Mammary epithelial cell (primary cell): ENCODE measurements at regions of chr3 and their contacts with region 1.

Region 1: GRCh38 chr3:179562591-179563270 is at the start of gene ACTL6A:
- DNase-seq: peak; percentile 100
- H3K4me3 ChIP-seq: peak within 1 kb of the TSS; percentile 85 to 98 (median 96)
- H3K27ac ChIP-seq: peak within 1 kb of the TSS; percentile 72
- H3K4me1 ChIP-seq: peaks cover 15% of the 10 kb centered on the region
- H3K27me3 ChIP-seq: no peaks in the 10 kb centered on the region
- CTCF ChIP-seq: no peak
- total RNA-seq, gene ACTL6A: 41.5 to 59.4 TPM

Region 2: DNA sequence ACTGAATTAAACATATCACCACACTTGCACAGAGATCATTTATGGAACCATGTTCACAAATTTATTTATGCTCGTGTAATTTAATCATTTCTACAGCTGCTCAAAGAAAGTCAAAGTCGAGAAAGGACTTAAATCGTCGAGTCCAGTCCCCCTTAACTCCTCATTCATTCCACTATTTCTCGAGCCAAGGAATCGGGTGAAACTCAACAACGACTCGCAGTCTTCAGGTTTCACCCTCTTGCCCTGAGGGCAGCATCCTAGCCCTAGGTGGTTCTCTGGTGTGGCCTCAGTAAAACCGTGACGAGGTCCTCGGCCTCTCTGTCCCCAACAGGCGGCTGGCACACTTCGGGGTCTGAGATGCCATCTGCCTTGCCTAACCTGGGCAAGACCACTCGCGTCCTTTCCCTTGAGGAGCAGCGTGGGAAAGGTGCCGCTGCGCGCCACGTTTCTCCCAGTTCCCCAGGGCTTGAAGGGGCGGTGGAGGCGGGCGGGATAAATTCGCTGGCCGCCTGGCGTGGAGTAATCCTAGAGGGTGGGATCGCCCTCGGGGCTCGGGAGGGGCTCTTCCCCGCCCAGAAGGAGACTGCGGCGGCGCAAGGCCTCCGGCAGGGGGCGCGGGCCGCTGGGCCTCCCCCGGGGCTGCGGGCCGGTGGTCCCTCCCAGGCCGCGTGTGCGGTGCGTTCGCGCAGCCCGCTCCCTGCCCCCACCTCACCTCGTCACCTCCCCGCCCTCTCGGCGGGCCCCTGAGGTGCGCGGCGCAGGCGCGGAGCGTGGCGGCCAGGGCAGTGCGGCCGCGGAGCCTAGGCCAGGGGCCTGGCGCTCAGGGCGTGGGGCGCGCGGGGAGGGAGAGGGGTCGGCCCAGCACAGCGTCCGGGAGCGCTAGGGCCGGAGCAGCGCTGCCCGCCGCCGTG is 240.2 kb before region 1 on chr3 and contains the start of gene ZNF639:
- CTCF ChIA-PET with region 1: no interaction called
- dilution Hi-C with region 1: no loop called
- in situ Hi-C with region 1: no loop called
- intact Hi-C with region 1: loop called (anchors 1 kb)
- DNase-seq: peak; percentile 67
- H3K4me3 ChIP-seq: peak within 1 kb of the TSS; percentile 79 to 96 (median 80)
- H3K27ac ChIP-seq: peak within 1 kb of the TSS; percentile 63
- H3K4me1 ChIP-seq: peaks cover 25% of the 10 kb centered on the region
- H3K27me3 ChIP-seq: no peaks in the 10 kb centered on the region
- CTCF ChIP-seq: peak; percentile 41 to 58
- total RNA-seq, gene ZNF639: 25.3 to 27.7 TPM

Region 3: DNA sequence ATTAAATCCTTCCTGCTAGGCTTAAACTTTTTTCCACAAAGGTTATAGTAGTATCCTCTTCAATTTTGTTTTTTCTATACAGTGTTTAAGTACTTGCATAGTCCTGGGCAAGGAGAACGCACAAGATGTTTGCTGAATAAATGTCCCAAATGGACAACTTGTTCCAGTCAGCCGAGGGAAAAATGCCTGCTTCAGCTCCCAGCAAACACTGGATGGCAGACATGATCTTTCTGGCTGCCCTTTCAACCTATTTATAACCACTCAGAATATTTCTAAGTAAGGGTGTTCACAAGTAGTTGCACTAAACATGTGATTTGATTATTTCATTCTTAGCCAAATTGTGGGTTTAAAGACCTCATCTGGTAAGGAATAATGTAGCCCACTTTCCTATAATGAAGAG is 141.2 kb before region 1 on chr3:
- CTCF ChIA-PET with region 1: interaction called, 3 read pairs
- dilution Hi-C with region 1: no loop called
- in situ Hi-C with region 1: no loop called
- intact Hi-C with region 1: loop called (anchors 1 kb)
- DNase-seq: peak; percentile 15
- H3K4me3 ChIP-seq: no peak overlapping the region
- H3K27ac ChIP-seq: no peak overlapping the region
- H3K4me1 ChIP-seq: no peaks in the 10 kb centered on the region
- H3K27me3 ChIP-seq: no peaks in the 10 kb centered on the region
- CTCF ChIP-seq: peak; percentile 37 to 57

Region 4: GRCh38 chr3:179446501-179446900 is 116.2 kb before region 1 on chr3:
- CTCF ChIA-PET with region 1: no interaction called
- dilution Hi-C with region 1: no loop called
- in situ Hi-C with region 1: loop called (anchors 10 kb)
- intact Hi-C with region 1: loop called (anchors 1 kb)
- DNase-seq: peak; percentile 38
- H3K4me3 ChIP-seq: no peak overlapping the region
- H3K27ac ChIP-seq: no peak overlapping the region
- H3K4me1 ChIP-seq: peaks cover 6% of the 10 kb centered on the region
- H3K27me3 ChIP-seq: no peaks in the 10 kb centered on the region
- CTCF ChIP-seq: peak; percentile 32 to 44

Region 5: DNA sequence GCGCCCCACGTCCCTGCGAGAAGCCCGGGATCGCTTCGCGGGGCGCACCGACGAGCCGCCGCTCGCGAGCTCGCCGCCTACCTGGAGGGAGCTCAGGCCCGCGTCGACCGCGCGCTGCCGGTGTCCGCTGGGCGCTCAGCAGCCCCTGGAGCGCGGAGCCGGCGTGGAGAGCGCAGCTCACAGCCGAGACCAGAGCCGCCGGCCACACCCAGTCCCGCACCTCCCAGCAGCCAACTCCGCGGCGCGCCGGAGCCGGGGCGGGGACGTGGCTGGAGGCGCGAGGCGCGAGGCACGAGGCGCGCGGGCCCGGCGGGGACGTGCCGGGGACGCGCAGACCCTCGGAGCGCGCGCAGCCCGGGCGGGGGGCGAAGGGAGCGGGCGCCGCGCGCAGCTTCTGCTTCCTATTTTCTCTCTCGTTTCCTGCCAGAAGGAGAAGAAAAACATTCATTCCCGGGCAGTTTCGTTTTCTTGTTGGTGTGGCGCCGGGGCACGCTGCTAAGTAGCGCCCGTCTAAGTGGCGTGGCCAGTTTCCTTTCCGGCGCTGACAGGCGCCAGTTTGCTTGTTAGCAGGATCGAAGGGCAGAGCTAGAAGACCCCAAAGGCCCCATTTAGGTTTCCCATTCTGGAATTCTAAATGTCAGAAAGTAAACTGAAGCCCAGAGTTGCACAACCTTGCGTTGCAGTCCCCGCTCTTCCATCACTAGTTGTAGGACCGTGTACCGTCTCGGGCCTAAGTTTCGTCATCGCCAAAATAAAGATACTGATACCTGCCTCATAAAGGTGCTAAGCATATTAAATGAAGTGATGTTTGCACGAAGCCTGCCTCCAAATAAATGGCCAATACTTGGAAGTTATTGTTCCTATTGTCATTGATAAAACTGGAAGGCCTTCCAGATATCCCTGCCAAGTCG is 111.2 kb before region 1 on chr3 and contains the start of gene GNB4:
- CTCF ChIA-PET with region 1: no interaction called
- dilution Hi-C with region 1: no loop called
- in situ Hi-C with region 1: loop called (anchors 10 kb)
- intact Hi-C with region 1: loop called (anchors 1 kb)
- DNase-seq: peak; percentile 78
- H3K4me3 ChIP-seq: peak within 1 kb of the TSS; percentile 47 to 77 (median 71)
- H3K27ac ChIP-seq: peak within 1 kb of the TSS; percentile 63
- H3K4me1 ChIP-seq: peaks cover 29% of the 10 kb centered on the region
- H3K27me3 ChIP-seq: no peaks in the 10 kb centered on the region
- CTCF ChIP-seq: no peak
- total RNA-seq, gene GNB4: 52.3 to 201 TPM

Region 6: DNA sequence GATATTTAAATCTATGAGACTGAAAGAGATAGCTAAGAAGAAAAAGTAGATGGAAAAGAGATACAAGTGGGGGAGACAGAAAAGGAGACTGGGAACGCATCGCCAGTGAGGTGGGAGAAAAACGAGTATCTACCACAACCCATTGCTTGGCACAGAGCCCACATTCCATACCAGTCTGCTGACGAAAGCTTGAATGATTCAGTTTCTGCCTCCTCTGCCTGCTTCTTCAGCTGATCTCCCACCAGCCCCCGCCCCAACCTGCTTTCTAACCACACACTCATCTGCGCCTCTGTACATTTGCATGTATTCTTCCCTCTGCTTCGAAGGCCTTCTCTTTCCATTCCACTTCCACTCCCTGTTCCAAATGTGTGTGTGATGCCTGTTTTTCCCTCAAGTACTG is 278.3 kb after region 1 on chr3:
- CTCF ChIA-PET with region 1: no interaction called
- dilution Hi-C with region 1: no loop called
- in situ Hi-C with region 1: no loop called
- intact Hi-C with region 1: no loop called
- DNase-seq: peak; percentile 88
- H3K4me3 ChIP-seq: no peak overlapping the region
- H3K27ac ChIP-seq: peak overlapping the region; percentile 36
- H3K4me1 ChIP-seq: peaks cover 7% of the 10 kb centered on the region
- H3K27me3 ChIP-seq: no peaks in the 10 kb centered on the region
- CTCF ChIP-seq: no peak